ENCODE measurements at regions of chr4 and their contacts with region 1.

Region 1: GRCh38 chr4:73019462-73020047 is 50.0 kb downstream of the COX18 start:
- DNase-seq: peak; percentile 28
- ATAC-seq: no peak
- H3K4me3 Mint-ChIP-seq: no peak overlapping the region
- H3K27ac Mint-ChIP-seq: no peak overlapping the region
- H3K4me1 Mint-ChIP-seq: no peaks in the 10 kb centered on the region
- H3K27me3 Mint-ChIP-seq: peaks cover 4% of the 10 kb centered on the region

Region 2: DNA sequence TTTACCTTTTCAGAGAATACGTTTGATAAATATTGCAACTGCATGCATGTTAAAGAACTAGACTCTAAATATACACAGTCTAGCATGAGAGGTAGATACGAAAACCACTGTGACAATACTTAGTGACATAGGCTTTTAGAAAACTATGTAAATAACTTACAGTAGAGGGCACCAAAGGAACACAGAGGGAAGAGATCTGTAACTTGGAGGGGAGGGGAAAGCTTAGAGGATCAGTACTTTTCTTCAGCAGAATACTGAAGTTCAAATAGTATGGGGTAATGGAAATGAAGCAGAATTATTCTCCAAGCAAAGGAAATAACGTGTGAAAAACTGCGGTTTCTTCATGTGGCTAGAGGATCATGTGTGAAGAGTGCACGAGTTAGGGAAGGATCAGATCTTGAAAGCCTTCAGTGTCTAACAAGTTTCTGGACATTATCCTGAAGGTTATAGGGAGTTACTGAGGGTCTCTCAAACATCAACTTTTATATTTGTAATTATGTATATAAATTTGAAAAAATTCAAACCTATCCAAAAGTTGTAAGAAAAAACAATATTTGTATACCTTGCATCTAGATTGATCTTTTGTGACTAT is 723.5 kb before region 1 on chr4:
- CTCF ChIA-PET with region 1: no interaction called
- POLR2A ChIA-PET with region 1: no interaction called
- intact Hi-C with region 1: loop called in 1 of 2 experiments (anchors 5 kb)
- DNase-seq: no peak
- ATAC-seq: peak; percentile 36
- H3K4me3 Mint-ChIP-seq: no peak overlapping the region
- H3K27ac Mint-ChIP-seq: no peak overlapping the region
- H3K4me1 Mint-ChIP-seq: no peaks in the 10 kb centered on the region
- H3K27me3 Mint-ChIP-seq: peaks cover 11% of the 10 kb centered on the region

Region 3: GRCh38 chr4:72326692-72327632 is 692.6 kb before region 1 on chr4:
- CTCF ChIA-PET with region 1: interaction called, 18 read pairs
- POLR2A ChIA-PET with region 1: no interaction called
- intact Hi-C with region 1: loop called (anchors 1 to 2 kb)
- DNase-seq: no peak
- ATAC-seq: no peak
- H3K4me3 Mint-ChIP-seq: no peak overlapping the region
- H3K27ac Mint-ChIP-seq: no peak overlapping the region
- H3K4me1 Mint-ChIP-seq: no peaks in the 10 kb centered on the region
- H3K27me3 Mint-ChIP-seq: peaks cover 5% of the 10 kb centered on the region

Region 4: DNA sequence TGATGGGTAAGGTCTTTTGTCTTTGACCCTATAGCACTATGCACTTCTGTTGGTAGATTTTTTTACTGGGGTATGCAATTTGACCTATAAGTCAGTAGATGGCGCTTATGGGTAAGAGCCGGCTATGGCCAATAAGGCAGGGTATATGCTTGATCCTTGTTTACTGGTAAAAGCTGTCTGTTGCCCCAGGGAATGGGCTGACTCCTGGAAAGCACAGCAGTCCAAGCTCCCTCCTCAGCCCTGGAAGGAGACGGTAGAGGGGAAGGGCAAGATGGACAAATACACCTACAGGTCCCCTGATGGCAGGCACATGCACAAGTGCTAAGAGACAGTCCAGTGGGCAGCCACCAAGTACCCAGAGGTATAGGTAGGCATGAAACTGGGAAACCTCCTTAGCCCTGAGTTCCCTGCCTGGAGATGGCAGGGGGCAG is 514.2 kb before region 1 on chr4:
- CTCF ChIA-PET with region 1: interaction called, 3 read pairs
- POLR2A ChIA-PET with region 1: no interaction called
- intact Hi-C with region 1: loop called in 1 of 2 experiments (anchors 1 kb)
- DNase-seq: no peak
- ATAC-seq: no peak
- H3K4me3 Mint-ChIP-seq: no peak overlapping the region
- H3K27ac Mint-ChIP-seq: no peak overlapping the region
- H3K4me1 Mint-ChIP-seq: no peaks in the 10 kb centered on the region
- H3K27me3 Mint-ChIP-seq: peaks cover 4% of the 10 kb centered on the region

Region 5: DNA sequence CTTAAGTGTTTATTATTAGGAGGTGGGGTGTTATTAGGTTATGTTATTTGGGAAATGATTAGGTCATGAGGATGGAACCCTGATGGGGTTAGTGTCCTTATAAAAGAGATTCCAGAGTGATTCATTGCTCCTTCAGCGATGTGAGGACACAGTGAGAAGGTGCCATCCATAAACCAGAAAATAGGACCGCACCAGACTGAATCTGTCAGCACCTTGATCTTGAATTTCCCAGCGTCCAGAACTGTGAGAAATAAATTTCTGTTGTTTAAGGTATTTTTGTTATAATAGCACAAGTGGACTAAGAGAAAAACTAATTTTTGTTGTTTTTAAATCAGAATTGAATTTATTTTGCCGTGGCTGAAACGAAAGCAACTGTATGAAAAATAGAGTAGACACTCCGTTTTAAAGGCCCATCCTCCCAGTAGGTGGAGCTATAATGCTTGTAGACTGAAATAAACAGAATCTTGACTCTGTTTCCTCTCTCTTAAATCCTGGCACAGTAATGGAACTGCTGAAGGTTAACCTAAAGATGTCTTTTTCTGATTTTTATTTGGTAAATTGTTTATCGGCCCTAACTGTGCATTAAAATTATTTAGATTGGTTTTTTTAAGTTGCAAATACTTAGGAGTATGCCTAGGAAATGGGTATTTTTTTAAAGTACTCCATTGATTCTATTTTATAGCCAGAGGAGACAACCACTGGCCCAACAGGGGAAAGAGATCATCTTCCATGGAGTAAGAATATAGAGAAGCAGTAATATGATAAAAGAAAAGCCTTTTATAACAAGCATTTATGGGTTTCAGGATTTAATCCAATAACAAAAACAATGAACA is 317.4 kb before region 1 on chr4:
- CTCF ChIA-PET with region 1: interaction called, 5 read pairs
- POLR2A ChIA-PET with region 1: no interaction called
- intact Hi-C with region 1: loop called (anchors 1 kb)
- DNase-seq: peak; percentile 44
- ATAC-seq: peak; percentile 68
- H3K4me3 Mint-ChIP-seq: peak overlapping the region; percentile 69
- H3K27ac Mint-ChIP-seq: no peak overlapping the region
- H3K4me1 Mint-ChIP-seq: no peaks in the 10 kb centered on the region
- H3K27me3 Mint-ChIP-seq: peaks cover 4% of the 10 kb centered on the region

Region 6: DNA sequence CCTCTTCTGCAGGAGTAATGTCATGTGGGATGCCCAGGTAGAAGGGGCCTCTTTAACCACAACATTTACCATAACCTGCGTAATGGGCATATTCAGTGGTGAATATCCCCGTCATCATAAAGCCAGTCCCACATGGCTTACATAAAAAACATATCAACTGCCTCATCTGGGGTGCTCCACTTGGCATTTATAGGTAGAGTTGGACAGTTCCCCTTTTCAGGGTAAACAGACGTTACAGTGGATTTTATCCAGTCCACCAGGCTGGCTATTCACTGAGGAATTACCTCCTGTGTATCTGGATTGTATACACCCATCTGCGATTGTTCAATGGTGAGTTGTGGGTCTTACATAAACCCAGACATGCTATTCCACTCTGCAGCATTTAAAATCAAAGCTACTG is 309.7 kb after region 1 on chr4:
- CTCF ChIA-PET with region 1: no interaction called
- POLR2A ChIA-PET with region 1: no interaction called
- intact Hi-C with region 1: no loop called
- DNase-seq: no peak
- ATAC-seq: no peak
- H3K4me3 Mint-ChIP-seq: no peak overlapping the region
- H3K27ac Mint-ChIP-seq: no peak overlapping the region
- H3K4me1 Mint-ChIP-seq: no peaks in the 10 kb centered on the region
- H3K27me3 Mint-ChIP-seq: no peaks in the 10 kb centered on the region

Measured in activated CD4-positive, alpha-beta T cell treated with anti-CD3 and anti-CD28 coated beads for 36 hours (primary cell).